ENCODE measurements at regions of chr1 and their contacts with region 1.

Region 1: GRCh38 chr1:172443626-172444453 is at the start of gene PIGC:
- DNase-seq: peak; percentile 89 to 96 (median 93)
- ATAC-seq: peak; percentile 93 to 100 (median 99)
- H3K4me3 ChIP-seq: peak within 1 kb of the TSS; percentile 49 to 100 (median 96)
- H3K27ac ChIP-seq: peak within 1 kb of the TSS; percentile 59 to 91 (median 81)
- H3K4me1 ChIP-seq: peaks cover 0 to 23% (median 12%) of the 10 kb centered on the region in 12 donors
- H3K27me3 ChIP-seq: no peaks in the 10 kb centered on the region
- CTCF ChIP-seq: peak; percentile 78 to 93 (median 86)
- POLR2A ChIP-seq: peak in 1 of 2 donors; percentile 52
- total RNA-seq, gene PIGC: 12.3 to 17.6 (median 14.1) TPM

Region 2: GRCh38 chr1:171801487-171801891 is 642.4 kb before region 1 on chr1:
- intact Hi-C with region 1: loop called in 2 of 10 experiments (anchors 5 to 10 kb)
- DNase-seq: no peak
- ATAC-seq: peak in 3 of 4 donors; percentile 33 to 46 (median 44)
- H3K4me3 ChIP-seq: no peak overlapping the region
- H3K27ac ChIP-seq: no peak overlapping the region
- H3K4me1 ChIP-seq: peaks cover 0 to 40% (median 10%) of the 10 kb centered on the region in 12 donors
- H3K27me3 ChIP-seq: no peaks in the 10 kb centered on the region
- CTCF ChIP-seq: peak; percentile 57 to 84 (median 78)
- POLR2A ChIP-seq: no peak

Region 3: GRCh38 chr1:172002725-172003345 is 441.0 kb before region 1 on chr1:
- intact Hi-C with region 1: loop called in 3 of 10 experiments (anchors 5 to 10 kb)
- DNase-seq: peak in 1 of 5 donors; percentile 14
- ATAC-seq: no peak
- H3K4me3 ChIP-seq: no peak overlapping the region
- H3K27ac ChIP-seq: no peak overlapping the region
- H3K4me1 ChIP-seq: no peaks in the 10 kb centered on the region
- H3K27me3 ChIP-seq: no peaks in the 10 kb centered on the region
- CTCF ChIP-seq: peak; percentile 41 to 79 (median 62)
- POLR2A ChIP-seq: no peak

Region 4: GRCh38 chr1:172089768-172090510 is 353.9 kb before region 1 on chr1:
- intact Hi-C with region 1: loop called in 1 of 10 experiments (anchors 2 kb)
- DNase-seq: peak; percentile 14 to 61 (median 43)
- ATAC-seq: peak; percentile 64 to 85 (median 76)
- H3K4me3 ChIP-seq: no peak overlapping the region
- H3K27ac ChIP-seq: no peak overlapping the region
- H3K4me1 ChIP-seq: no peaks in the 10 kb centered on the region
- H3K27me3 ChIP-seq: no peaks in the 10 kb centered on the region
- CTCF ChIP-seq: peak; percentile 43 to 74 (median 66)
- POLR2A ChIP-seq: no peak